ENCODE measurements at regions of chr6 and their contacts with region 1.

Region 1: GRCh38 chr6:13916230-13916944 is 8.4 kb upstream of the RNF182 start:
- DNase-seq: no peak
- ATAC-seq: no peak
- H3K4me3 ChIP-seq: no peak overlapping the region
- H3K27ac ChIP-seq: no peak overlapping the region
- H3K4me1 ChIP-seq: peaks cover 0 to 4% (median 0%) of the 10 kb centered on the region in 9 donors
- H3K27me3 ChIP-seq: peaks cover 0 to 52% (median 14%) of the 10 kb centered on the region in 7 donors
- CTCF ChIP-seq: no peak

Region 2: GRCh38 chr6:12383448-12383847 is 1532.9 kb before region 1 on chr6:
- intact Hi-C with region 1: no loop called
- DNase-seq: no peak
- ATAC-seq: no peak
- H3K4me3 ChIP-seq: no peak overlapping the region
- H3K27ac ChIP-seq: no peak overlapping the region
- H3K4me1 ChIP-seq: no peaks in the 10 kb centered on the region
- H3K27me3 ChIP-seq: no peaks in the 10 kb centered on the region
- CTCF ChIP-seq: no peak

Region 3: DNA sequence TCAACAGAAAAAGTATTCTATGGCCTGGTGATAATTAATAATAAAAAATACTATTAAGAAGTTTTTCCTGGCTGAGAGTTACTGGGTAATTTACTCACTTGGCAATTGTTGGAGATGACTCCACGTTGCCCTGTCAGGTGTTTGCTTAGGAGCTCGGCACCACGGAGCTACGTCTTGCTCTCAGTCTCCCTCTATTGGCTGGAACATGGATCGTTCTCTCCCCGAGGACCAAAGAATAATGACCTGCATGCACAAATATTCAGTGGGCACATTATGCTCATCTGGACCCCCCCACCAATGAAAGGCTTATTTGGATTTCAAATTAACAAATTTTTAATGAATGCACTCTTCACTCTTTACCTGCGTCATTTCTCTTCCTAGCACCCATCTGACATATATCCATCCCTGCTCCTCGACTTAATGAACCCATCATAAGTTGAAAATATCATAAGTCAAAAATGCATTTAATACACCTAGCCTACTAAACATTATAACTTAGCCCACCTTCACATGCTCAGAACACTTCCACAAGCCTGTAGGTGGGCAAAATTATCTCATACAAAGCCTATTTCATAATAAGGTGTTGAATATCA is 130.2 kb after region 1 on chr6:
- intact Hi-C with region 1: loop called in 4 of 10 experiments (anchors 5 to 10 kb)
- DNase-seq: no peak
- ATAC-seq: peak in 1 of 8 donors; percentile 43
- H3K4me3 ChIP-seq: no peak overlapping the region
- H3K27ac ChIP-seq: no peak overlapping the region
- H3K4me1 ChIP-seq: no peaks in the 10 kb centered on the region
- H3K27me3 ChIP-seq: peaks cover 0 to 43% (median 24%) of the 10 kb centered on the region in 7 donors
- CTCF ChIP-seq: peak; percentile 27 to 71 (median 63)

Region 4: DNA sequence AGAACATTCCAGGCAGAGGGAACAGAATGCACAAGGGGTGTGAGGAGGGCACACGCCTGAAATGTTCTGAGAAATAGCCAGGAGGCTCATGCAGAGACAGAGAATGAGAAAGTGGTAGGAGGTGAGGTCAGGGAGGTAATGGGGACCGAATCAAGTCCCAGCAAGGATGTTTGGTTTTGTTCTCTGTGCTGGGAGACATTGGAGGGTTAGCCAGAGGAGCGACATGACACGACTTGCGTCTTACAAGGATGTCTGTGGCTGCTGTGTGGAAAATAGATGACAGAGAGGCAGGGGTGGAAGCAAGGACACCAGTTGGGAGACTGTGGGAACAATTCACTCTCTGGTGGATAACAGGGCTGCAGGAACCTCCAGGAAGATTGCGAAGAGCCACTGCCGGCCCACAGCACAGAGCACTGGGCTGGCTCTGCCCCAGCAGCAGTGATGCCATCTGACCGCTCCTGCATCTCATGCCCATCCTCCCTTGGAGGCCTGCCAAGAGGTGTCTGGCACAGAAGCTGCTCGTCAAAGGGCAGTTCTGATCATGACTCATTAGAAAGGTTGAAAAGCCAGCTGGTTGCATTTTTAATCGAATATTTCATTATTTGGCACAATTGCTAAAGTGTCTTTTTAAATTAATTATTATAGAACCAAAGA is 143.5 kb after region 1 on chr6:
- intact Hi-C with region 1: loop called in 1 of 10 experiments (anchors 5 kb)
- DNase-seq: peak; percentile 39 to 47
- ATAC-seq: peak in 6 of 8 donors; percentile 72 to 94 (median 75)
- H3K4me3 ChIP-seq: no peak overlapping the region
- H3K27ac ChIP-seq: no peak overlapping the region
- H3K4me1 ChIP-seq: peaks cover 0 to 8% (median 0%) of the 10 kb centered on the region in 9 donors
- H3K27me3 ChIP-seq: peaks cover 0 to 36% (median 7%) of the 10 kb centered on the region in 7 donors
- CTCF ChIP-seq: no peak

Region 5: DNA sequence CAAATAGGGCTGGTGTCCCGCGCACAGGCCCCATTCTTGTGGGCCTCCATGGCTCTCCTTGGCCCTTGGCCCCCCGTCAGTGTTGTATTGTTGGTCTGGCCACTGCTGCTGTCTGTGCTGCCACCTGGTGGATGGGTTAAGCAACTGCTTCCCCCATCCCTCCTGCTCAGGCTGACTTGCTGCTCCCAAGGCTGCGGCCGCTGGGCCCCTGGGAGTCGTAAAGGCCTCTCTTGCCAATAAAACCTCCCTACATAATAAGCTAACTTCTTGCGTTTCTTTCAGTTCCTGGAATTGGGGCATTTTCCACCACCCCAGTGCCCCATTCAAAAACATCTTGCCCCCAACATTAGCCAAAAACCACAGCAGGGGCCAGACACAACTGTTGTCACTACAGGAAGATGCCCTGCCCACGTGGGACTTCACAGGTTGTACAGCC is 228.3 kb after region 1 on chr6:
- intact Hi-C with region 1: loop called in 1 of 10 experiments (anchors 10 kb)
- DNase-seq: peak; percentile 58 to 60
- ATAC-seq: peak; percentile 70 to 83 (median 78)
- H3K4me3 ChIP-seq: no peak overlapping the region
- H3K27ac ChIP-seq: no peak overlapping the region
- H3K4me1 ChIP-seq: peaks cover 0 to 8% (median 0%) of the 10 kb centered on the region in 9 donors
- H3K27me3 ChIP-seq: no peaks in the 10 kb centered on the region
- CTCF ChIP-seq: peak; percentile 81 to 98 (median 92)